Activated CD4-positive, alpha-beta T cell treated with anti-CD3 and anti-CD28 coated beads for 36 hours (primary cell): ENCODE measurements at regions of chr4 and their contacts with region 1.

Region 1: DNA sequence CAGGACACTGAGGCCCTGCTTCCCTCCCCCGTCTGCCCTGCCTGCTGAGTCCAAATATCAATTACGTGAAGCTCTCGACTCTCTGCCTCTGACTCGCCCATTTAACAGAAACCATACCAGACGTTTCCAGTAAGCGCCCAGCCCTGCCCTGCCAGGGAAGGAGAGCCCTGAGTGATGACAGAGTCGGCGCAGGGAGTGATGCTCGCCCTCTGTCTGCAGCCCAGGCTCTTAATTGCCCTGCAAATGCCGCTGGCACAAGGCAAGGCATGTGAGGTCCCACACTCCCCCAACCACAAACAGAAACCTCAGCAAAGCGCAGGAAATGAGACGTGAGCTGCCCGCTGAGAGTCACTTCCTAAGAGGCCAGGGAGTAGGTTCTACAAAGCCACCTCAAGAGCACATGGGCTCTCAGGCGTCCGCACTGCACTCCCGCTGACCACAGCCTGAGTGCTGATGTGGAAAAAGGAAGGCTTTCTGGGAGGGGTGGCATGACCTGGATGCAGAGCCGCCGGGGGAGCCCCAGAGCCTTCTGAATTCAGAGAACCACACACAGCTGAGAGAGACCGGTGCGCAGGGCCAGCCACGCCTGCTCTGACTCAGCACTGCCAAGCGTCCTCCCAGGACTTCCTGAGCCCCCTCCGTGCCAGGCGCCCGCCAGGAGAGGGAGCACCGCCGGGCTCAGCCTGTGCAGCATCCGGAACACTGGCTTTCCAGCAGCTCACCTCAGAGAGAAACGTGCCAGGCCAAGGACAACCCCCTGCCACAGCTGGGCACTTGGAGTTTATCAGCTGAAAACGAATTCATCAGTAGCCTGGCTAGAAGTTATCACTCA is 5.3 kb downstream of the ZFYVE28 start:
- DNase-seq: peak; percentile 94
- ATAC-seq: peak; percentile 82
- H3K4me3 Mint-ChIP-seq: peak overlapping the region; percentile 70
- H3K27ac Mint-ChIP-seq: peak overlapping the region; percentile 97
- H3K4me1 Mint-ChIP-seq: peaks cover 69% of the 10 kb centered on the region
- H3K27me3 Mint-ChIP-seq: peaks cover 9% of the 10 kb centered on the region

Region 2: DNA sequence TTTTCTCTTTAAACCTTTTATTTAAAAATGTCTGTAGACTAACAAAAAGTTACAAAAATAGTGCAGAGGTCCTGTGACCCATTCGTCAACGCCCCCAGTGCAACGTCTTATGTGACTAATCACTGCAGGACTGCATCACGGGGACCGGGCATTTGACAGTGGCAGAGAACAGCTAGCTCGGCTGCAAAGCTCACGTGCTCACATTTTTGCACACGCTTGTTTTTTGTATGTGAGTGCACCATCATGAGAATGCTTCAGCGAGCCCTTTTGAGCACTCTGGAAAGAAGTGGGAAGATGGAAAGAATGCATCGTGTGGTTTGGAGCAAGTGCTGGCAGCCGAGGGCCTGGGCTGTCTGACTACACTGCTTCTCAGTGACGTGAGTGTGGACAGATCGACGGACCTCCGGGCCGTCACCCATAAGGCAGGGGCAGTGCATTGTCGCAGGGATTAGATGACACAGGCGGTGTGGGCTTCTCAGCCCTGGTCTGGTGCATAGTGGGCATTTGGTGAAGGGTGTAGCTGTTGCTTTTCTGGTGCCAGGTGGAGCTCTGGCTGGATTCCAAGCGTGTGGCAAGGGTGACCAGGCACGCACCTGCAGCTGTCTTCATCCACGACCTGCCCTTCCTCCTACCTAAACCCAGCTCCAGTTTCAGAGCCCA is 1258.4 kb before region 1 on chr4:
- CTCF ChIA-PET with region 1: no interaction called
- POLR2A ChIA-PET with region 1: no interaction called
- intact Hi-C with region 1: no loop called
- DNase-seq: no peak
- ATAC-seq: no peak
- H3K4me3 Mint-ChIP-seq: no peak overlapping the region
- H3K27ac Mint-ChIP-seq: no peak overlapping the region
- H3K4me1 Mint-ChIP-seq: no peaks in the 10 kb centered on the region
- H3K27me3 Mint-ChIP-seq: peaks cover 5% of the 10 kb centered on the region

Region 3: DNA sequence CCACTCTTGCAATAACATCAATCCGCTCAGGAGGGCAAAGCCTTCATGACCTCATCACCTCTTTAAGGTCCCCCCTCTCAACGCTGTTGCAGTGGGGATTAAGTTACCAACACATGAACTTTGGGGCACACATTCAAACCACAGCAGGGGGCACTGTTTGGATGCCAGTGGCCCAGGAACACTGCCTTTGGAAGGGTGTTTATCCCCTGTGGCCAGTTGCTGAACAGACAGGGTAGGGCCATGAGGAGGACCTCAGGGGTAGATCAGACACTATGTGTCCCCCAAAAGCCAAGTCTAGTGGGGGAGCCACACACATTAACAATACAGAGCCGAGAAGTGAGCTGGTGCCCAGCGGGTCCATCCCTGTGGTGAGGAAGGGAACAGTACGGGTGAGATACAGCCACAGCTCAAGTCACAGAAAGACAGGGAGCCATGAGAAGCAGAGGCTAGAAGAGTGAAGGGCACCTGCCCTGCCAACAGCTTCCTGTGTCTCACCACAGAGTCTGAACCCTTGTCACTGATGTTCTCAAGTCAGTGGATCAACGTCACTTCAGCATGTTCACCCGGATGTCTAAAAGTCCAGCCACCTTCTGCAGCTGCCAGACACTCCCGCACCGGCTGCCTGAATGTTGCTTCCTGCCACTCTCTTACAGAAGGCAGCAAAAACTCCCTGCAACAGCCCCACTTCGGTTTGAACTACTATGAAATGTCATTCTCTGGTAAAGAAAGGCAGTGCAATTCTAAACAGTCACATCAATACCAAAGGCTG is 131.3 kb before region 1 on chr4:
- CTCF ChIA-PET with region 1: interaction called, 3 read pairs
- POLR2A ChIA-PET with region 1: no interaction called
- intact Hi-C with region 1: loop called (anchors 2 to 5 kb)
- DNase-seq: peak; percentile 83
- ATAC-seq: peak; percentile 96
- H3K4me3 Mint-ChIP-seq: no peak overlapping the region
- H3K27ac Mint-ChIP-seq: peak overlapping the region; percentile 82
- H3K4me1 Mint-ChIP-seq: peaks cover 34% of the 10 kb centered on the region
- H3K27me3 Mint-ChIP-seq: no peaks in the 10 kb centered on the region

Region 4: DNA sequence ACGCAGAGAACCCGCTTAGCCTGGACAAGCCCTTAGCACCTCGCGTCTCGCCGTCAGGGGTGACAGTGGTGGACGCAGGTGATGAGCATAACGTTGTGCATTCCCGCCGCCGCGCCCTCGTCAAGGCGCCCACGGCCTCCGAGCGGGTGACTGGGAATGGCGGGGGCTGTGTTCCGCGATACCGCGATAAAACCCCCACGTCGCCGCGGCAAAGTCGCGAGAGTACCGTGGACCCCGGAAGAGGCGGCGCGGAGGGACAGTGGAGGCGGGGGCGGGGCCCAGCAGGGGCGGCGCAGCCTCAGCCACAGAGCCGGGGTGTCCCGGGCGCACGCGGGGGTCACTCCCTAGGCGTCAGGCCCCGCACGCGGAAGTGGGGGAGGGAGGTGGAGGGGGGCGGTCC is 48.4 kb before region 1 on chr4:
- CTCF ChIA-PET with region 1: no interaction called
- POLR2A ChIA-PET with region 1: no interaction called
- intact Hi-C with region 1: loop called (anchors 2 kb)
- DNase-seq: peak; percentile 80
- ATAC-seq: peak; percentile 86
- H3K4me3 Mint-ChIP-seq: peak overlapping the region; percentile 61
- H3K27ac Mint-ChIP-seq: peak overlapping the region; percentile 25
- H3K4me1 Mint-ChIP-seq: peaks cover 4% of the 10 kb centered on the region
- H3K27me3 Mint-ChIP-seq: no peaks in the 10 kb centered on the region

Region 5: DNA sequence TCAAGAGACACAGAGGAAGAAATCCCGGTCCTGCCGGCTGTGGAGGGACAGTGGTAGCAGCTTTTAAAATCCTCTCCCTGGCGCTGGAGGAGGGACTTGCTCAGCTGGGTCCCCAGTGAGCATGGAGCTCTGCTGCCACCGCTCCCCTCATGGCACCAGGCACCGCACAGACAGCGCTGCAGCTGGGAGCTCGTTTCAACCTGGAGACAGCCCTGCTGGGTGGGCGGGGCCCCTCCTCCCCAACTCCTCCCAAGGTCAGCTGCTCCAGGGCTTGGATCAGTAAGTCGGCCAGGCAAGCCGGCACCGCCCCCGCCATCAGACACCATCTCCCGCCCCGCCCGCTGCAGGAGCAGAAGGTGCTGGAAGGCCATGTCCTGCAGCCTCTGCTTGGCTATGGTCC is 11.1 kb before region 1 on chr4:
- CTCF ChIA-PET with region 1: interaction called, 10 read pairs
- POLR2A ChIA-PET with region 1: no interaction called
- intact Hi-C with region 1: no loop called
- DNase-seq: peak; percentile 50
- ATAC-seq: peak; percentile 64
- H3K4me3 Mint-ChIP-seq: peak overlapping the region; percentile 54
- H3K27ac Mint-ChIP-seq: peak overlapping the region; percentile 31
- H3K4me1 Mint-ChIP-seq: peaks cover 27% of the 10 kb centered on the region
- H3K27me3 Mint-ChIP-seq: no peaks in the 10 kb centered on the region

Region 6: DNA sequence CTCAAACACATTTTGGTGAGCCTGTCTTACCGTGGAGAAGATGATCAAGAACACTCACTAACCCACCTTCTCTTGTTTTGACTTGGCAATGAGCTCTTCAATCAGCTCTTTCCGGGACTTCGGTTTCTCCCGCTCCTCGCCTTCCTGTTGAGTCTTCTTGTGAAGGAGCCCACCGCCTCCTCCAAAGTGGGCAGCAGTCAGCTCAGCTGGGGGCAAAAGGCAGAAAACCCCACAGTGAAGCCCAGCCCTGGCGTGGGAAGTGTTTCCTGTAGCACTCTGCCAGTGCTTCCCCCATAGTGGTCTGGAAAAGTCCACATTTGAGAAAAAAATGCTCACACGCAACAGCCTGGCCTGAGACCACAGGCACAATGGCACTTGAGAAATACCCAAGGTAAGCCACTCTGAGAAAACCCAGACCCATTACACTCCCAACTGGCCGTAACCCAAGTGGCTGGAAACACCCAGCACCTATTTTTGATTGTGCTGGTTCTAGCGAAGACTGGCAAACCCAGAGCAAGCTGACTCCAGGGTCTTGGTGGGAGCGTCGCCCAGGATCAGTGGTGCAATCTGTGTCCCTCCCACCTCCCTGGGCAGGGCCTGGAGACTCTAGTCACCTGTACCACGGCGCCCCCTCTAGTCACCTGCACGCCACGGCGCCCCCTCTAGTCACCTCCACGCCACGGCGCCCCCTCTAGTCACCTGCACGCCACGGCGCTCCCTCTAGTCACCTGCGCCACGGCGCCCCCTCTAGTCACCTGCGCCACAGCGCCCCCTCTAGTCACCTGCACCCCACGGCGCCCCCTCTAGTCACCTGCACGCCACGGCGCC is 541.5 kb after region 1 on chr4:
- CTCF ChIA-PET with region 1: interaction called, 3 read pairs
- POLR2A ChIA-PET with region 1: no interaction called
- intact Hi-C with region 1: loop called in 1 of 2 experiments (anchors 2 kb)
- DNase-seq: peak; percentile 88
- ATAC-seq: peak; percentile 83
- H3K4me3 Mint-ChIP-seq: peak overlapping the region; percentile 51
- H3K27ac Mint-ChIP-seq: peak overlapping the region; percentile 90
- H3K4me1 Mint-ChIP-seq: peaks cover 69% of the 10 kb centered on the region
- H3K27me3 Mint-ChIP-seq: no peaks in the 10 kb centered on the region